ENCODE measurements at regions of chr6 and their contacts with region 1.

Region 1: DNA sequence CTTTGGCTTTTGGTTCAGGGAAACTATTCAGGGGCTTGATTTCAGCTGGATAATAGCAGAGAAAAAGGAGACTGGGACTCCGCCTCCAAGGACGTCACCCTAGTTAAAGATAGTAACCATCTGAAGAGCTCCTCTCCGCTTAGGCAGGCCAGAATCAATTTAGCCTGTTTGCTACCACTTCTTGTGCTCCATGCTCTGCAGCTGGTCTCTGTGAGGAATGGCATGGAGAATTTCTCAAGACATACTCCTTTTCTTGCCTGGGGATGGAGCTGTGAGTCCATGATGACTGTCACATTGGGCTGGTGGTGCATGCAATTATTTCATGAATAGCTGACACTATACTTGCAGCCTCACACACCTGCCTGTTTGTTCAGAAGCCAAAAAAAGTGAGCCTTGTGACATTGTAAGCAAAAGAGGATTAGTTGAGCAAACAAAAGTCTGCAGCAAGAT is 61.4 kb downstream of the TXLNB start:
- DNase-seq: no peak
- ATAC-seq: peak; percentile 72 to 86 (median 83)
- H3K4me3 ChIP-seq: no peak overlapping the region
- H3K27ac ChIP-seq: peak overlapping the region; percentile 76
- H3K4me1 ChIP-seq: peaks cover 12% of the 10 kb centered on the region
- H3K27me3 ChIP-seq: no peaks in the 10 kb centered on the region
- CTCF ChIP-seq: no peak

Region 2: GRCh38 chr6:138773177-138774091 is 457.0 kb before region 1 on chr6 and contains the start of gene CCDC28A:
- intact Hi-C with region 1: no loop called
- DNase-seq: peak; percentile 93 to 97
- ATAC-seq: peak; percentile 98
- H3K4me3 ChIP-seq: peak within 1 kb of the TSS; percentile 87
- H3K27ac ChIP-seq: peak within 1 kb of the TSS; percentile 92
- H3K4me1 ChIP-seq: peaks cover 16% of the 10 kb centered on the region
- H3K27me3 ChIP-seq: no peaks in the 10 kb centered on the region
- CTCF ChIP-seq: no peak
- total RNA-seq, gene CCDC28A: 4.7 to 6.7 (median 5.3) TPM

Region 3: GRCh38 chr6:139175389-139175788 is 55.0 kb before region 1 on chr6:
- intact Hi-C with region 1: no loop called
- DNase-seq: no peak
- ATAC-seq: no peak
- H3K4me3 ChIP-seq: no peak overlapping the region
- H3K27ac ChIP-seq: no peak overlapping the region
- H3K4me1 ChIP-seq: no peaks in the 10 kb centered on the region
- H3K27me3 ChIP-seq: no peaks in the 10 kb centered on the region
- CTCF ChIP-seq: no peak

Region 4: DNA sequence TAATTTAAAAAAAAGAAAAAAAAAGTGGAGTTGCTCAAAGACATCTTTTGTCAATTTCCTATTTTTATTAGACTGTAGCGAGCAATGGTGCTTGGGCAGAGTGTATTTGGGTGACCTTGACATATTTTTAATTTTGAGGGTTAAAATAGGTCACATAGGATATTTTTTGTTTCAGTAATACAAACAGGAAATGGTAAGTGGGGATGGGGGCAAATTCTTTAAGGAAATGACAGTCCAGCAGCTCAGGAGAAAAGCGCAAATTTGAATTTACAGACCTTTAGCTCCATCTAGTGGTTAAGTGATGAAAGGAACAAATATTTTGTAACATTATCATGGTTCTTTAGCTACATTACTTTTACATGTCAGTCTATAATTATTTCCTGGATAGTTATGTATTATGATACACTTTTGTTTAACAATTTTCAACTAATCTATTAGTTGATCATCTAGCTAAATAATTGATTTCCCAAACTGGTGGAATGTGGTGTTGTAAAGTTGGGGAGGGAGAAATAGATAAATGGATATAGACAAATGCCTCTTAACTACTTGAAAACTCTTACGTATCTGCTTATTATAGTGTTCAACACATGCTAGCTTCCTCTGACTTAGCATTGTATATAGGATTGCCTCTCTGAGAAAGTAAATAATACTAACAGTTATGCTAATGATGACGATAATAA is 134.0 kb after region 1 on chr6:
- intact Hi-C with region 1: loop called in 1 of 2 experiments (anchors 5 kb)
- DNase-seq: no peak
- ATAC-seq: peak; percentile 46 to 82 (median 75)
- H3K4me3 ChIP-seq: no peak overlapping the region
- H3K27ac ChIP-seq: no peak overlapping the region
- H3K4me1 ChIP-seq: peaks cover 11% of the 10 kb centered on the region
- H3K27me3 ChIP-seq: no peaks in the 10 kb centered on the region
- CTCF ChIP-seq: peak; percentile 80

Region 5: GRCh38 chr6:139996253-139996834 is 765.9 kb after region 1 on chr6:
- intact Hi-C with region 1: loop called in 1 of 2 experiments (anchors 10 kb)
- DNase-seq: no peak
- ATAC-seq: peak; percentile 64 to 89 (median 81)
- H3K4me3 ChIP-seq: no peak overlapping the region
- H3K27ac ChIP-seq: no peak overlapping the region
- H3K4me1 ChIP-seq: peaks cover 4% of the 10 kb centered on the region
- H3K27me3 ChIP-seq: no peaks in the 10 kb centered on the region
- CTCF ChIP-seq: peak; percentile 21

Measured in psoas muscle (tissue), 8 donors.